ENCODE measurements at regions of chr10 and their contacts with region 1.

Region 1: GRCh38 chr10:34816501-34817002 is 1.5 kb upstream of the PARD3 start:
- DNase-seq: no peak
- ATAC-seq: no peak
- H3K4me3 ChIP-seq: no peak overlapping the region
- H3K4me3 Mint-ChIP-seq: peak overlapping the region; percentile 47
- H3K27ac ChIP-seq: no peak overlapping the region
- H3K27ac Mint-ChIP-seq: no peak overlapping the region
- H3K4me1 ChIP-seq: no peaks in the 10 kb centered on the region
- H3K4me1 Mint-ChIP-seq: peaks cover 14% of the 10 kb centered on the region
- H3K27me3 ChIP-seq: peaks cover 3 to 9% of the 10 kb centered on the region in 2 experiments
- H3K27me3 Mint-ChIP-seq: peaks cover 37% of the 10 kb centered on the region
- CTCF ChIP-seq: no peak

Region 2: GRCh38 chr10:34791947-34792346 is 24.6 kb before region 1 on chr10:
- CTCF ChIA-PET with region 1: no interaction called
- POLR2A ChIA-PET with region 1: no interaction called
- intact Hi-C with region 1: loop called in 1 of 2 experiments (anchors 1 kb)
- DNase-seq: no peak
- ATAC-seq: no peak
- H3K4me3 ChIP-seq: no peak overlapping the region
- H3K4me3 Mint-ChIP-seq: no peak overlapping the region
- H3K27ac ChIP-seq: no peak overlapping the region
- H3K27ac Mint-ChIP-seq: no peak overlapping the region
- H3K4me1 ChIP-seq: no peaks in the 10 kb centered on the region
- H3K4me1 Mint-ChIP-seq: no peaks in the 10 kb centered on the region
- H3K27me3 ChIP-seq: no peaks in the 10 kb centered on the region
- H3K27me3 Mint-ChIP-seq: peaks cover 2% of the 10 kb centered on the region
- CTCF ChIP-seq: no peak

Region 3: DNA sequence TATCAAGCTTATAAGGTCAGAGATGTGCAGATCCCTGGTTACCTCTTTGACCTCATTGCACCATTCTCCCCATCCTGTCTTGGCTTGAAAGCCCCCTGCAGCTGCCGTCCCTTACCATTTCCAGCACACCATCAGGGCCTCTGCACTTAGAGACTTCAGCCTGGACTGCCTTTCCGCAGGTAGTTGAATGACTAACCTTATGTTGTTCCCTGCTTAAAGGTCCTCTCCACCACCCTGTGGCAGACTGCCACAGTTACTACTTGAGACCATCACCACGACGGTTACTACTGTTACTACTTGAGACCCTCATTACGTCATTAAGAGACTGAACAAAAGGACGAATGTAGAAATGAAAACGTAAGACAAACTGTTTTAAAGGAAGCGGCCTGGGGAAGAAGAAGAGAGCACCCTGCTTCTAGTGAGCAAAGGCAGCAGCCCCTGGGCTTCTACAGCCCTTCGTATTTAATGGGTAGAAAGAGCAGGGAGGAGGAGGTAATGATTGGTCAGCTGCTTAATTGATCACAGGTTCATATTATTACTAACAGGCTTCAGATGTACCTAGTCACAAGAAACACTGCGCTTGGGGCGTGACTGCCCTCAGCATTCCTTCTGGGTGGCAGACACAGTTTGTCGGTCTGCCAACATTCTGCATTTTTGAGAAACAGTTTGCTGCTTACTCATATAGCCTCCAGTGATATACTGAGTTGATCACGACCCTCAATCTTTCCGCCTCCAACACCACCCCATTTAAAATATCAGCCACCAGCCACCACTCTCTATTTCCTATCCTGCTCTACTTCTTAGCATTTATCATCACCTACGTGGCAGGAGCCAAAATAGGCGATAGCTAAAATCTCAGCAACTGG is 72.7 kb after region 1 on chr10:
- CTCF ChIA-PET with region 1: no interaction called
- POLR2A ChIA-PET with region 1: no interaction called
- intact Hi-C with region 1: no loop called
- DNase-seq: no peak
- ATAC-seq: no peak
- H3K4me3 ChIP-seq: no peak overlapping the region
- H3K4me3 Mint-ChIP-seq: no peak overlapping the region
- H3K27ac ChIP-seq: no peak overlapping the region
- H3K27ac Mint-ChIP-seq: no peak overlapping the region
- H3K4me1 ChIP-seq: no peaks in the 10 kb centered on the region
- H3K4me1 Mint-ChIP-seq: no peaks in the 10 kb centered on the region
- H3K27me3 ChIP-seq: no peaks in the 10 kb centered on the region
- H3K27me3 Mint-ChIP-seq: no peaks in the 10 kb centered on the region
- CTCF ChIP-seq: no peak

Measured in CD8-positive, alpha-beta T cell (primary cell).